ENCODE measurements at regions of chr17 and their contacts with region 1.

Region 1: GRCh38 chr17:63232565-63233310 is 213.4 kb downstream of the CYB561 start:
- DNase-seq: peak in 1 of 2 experiments; percentile 52
- H3K4me3 ChIP-seq: no peak overlapping the region
- H3K27ac ChIP-seq: no peak overlapping the region
- H3K4me1 ChIP-seq: no peaks in the 10 kb centered on the region
- H3K27me3 ChIP-seq: no peaks in the 10 kb centered on the region
- CTCF ChIP-seq: peak; percentile 18 to 40 (median 23)
- EP300 ChIP-seq: no peak
- POLR2A ChIP-seq: no peak
- RAD21 ChIP-seq: peak; percentile 38 to 58

Region 2: GRCh38 chr17:63222655-63223054 is 10.1 kb before region 1 on chr17:
- CTCF ChIA-PET with region 1: interaction called, 17 read pairs
- POLR2A ChIA-PET with region 1: no interaction called
- DNase-seq: no peak
- H3K4me3 ChIP-seq: no peak overlapping the region
- H3K27ac ChIP-seq: no peak overlapping the region
- H3K4me1 ChIP-seq: no peaks in the 10 kb centered on the region
- H3K27me3 ChIP-seq: no peaks in the 10 kb centered on the region
- CTCF ChIP-seq: peak in 1 of 3 experiments; percentile 17; a peak in 1 of 4 replicates
- EP300 ChIP-seq: no peak
- POLR2A ChIP-seq: no peak
- RAD21 ChIP-seq: no peak; a peak in 1 of 4 replicates

Region 3: GRCh38 chr17:63311416-63311937 is 78.7 kb after region 1 on chr17:
- CTCF ChIA-PET with region 1: no interaction called
- POLR2A ChIA-PET with region 1: no interaction called
- DNase-seq: no peak
- H3K4me3 ChIP-seq: no peak overlapping the region
- H3K27ac ChIP-seq: no peak overlapping the region
- H3K4me1 ChIP-seq: no peaks in the 10 kb centered on the region
- H3K27me3 ChIP-seq: no peaks in the 10 kb centered on the region
- CTCF ChIP-seq: no peak
- EP300 ChIP-seq: no peak
- POLR2A ChIP-seq: no peak
- RAD21 ChIP-seq: no peak